ENCODE measurements at regions of chr22 and their contacts with region 1.

Region 1: GRCh38 chr22:37608477-37609239 is at the start of gene GGA1:
- DNase-seq: peak; percentile 94
- ATAC-seq: peak; percentile 85
- H3K4me3 ChIP-seq: peak within 1 kb of the TSS; percentile 78 to 92 (median 82)
- H3K27ac ChIP-seq: peak within 1 kb of the TSS; percentile 97
- H3K4me1 ChIP-seq: peaks cover 46% of the 10 kb centered on the region
- H3K27me3 ChIP-seq: peaks cover 2 to 5% of the 10 kb centered on the region in 2 experiments; a peak in 1 of 5 replicates
- CTCF ChIP-seq: no peak
- EP300 ChIP-seq: no peak; a peak in 1 of 4 replicates
- POLR2A ChIP-seq: peak; percentile 61 to 69
- RAD21 ChIP-seq: peak; percentile 24; the same call in 1 of the 2 replicates
- total RNA-seq, gene GGA1: 16.0 and 29.1 TPM in 2 replicates

Region 2: DNA sequence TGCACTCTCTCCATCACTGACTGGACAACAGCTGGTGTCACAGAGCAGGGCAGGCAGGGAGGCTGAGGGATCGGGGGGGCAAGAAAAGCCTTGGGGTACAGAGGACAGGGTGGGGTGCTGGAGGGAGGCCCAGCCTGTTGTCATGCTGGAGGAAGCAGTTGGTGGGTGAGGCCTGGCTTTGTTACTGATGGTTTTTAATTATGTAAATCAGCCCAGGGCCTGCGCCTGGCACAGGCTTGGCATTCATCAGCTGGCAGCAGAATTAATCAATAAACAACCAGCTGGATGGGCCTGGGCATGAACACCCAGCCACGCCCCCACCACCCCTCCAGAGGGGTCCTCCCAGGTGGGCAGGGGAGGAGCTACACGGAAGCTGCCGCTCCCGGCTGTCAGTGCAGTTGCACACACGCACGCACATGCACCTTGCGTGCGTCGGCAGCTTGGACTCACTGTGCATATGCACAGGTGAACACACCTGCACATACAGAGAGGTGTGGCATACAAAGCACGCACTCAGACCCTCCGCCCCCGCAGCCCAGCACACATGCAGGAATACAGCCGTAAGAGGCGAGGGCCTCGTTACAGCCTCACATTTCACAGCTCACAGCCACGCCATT is 160.0 kb before region 1 on chr22:
- CTCF ChIA-PET with region 1: no interaction called
- POLR2A ChIA-PET with region 1: no interaction called
- in situ Hi-C with region 1: no loop called
- intact Hi-C with region 1: no loop called
- DNase-seq: no peak
- ATAC-seq: no peak
- H3K4me3 ChIP-seq: no peak overlapping the region
- H3K27ac ChIP-seq: no peak overlapping the region
- H3K4me1 ChIP-seq: peaks cover 6% of the 10 kb centered on the region
- H3K27me3 ChIP-seq: peaks cover 0 to 18% of the 10 kb centered on the region in 2 experiments; a peak in 4 of 5 replicates
- CTCF ChIP-seq: no peak
- EP300 ChIP-seq: no peak
- POLR2A ChIP-seq: no peak
- RAD21 ChIP-seq: no peak

Region 3: GRCh38 chr22:37511395-37512104 is 97.1 kb before region 1 on chr22:
- CTCF ChIA-PET with region 1: no interaction called
- POLR2A ChIA-PET with region 1: interaction called, 12 read pairs
- in situ Hi-C with region 1: no loop called
- intact Hi-C with region 1: no loop called
- DNase-seq: no peak
- ATAC-seq: no peak
- H3K4me3 ChIP-seq: peak overlapping the region in 1 of 3 experiments; percentile 47; a peak in 1 of 6 replicates
- H3K27ac ChIP-seq: peak overlapping the region; percentile 98
- H3K4me1 ChIP-seq: peaks cover 82% of the 10 kb centered on the region
- H3K27me3 ChIP-seq: no peaks in the 10 kb centered on the region
- CTCF ChIP-seq: no peak
- EP300 ChIP-seq: no peak
- POLR2A ChIP-seq: no peak
- RAD21 ChIP-seq: no peak

Region 4: GRCh38 chr22:37544955-37545699 is 63.5 kb before region 1 on chr22:
- CTCF ChIA-PET with region 1: no interaction called
- POLR2A ChIA-PET with region 1: interaction called, 25 read pairs
- in situ Hi-C with region 1: loop called (anchors 10 kb)
- intact Hi-C with region 1: no loop called
- DNase-seq: peak; percentile 81
- ATAC-seq: peak; percentile 55
- H3K4me3 ChIP-seq: peak overlapping the region; percentile 32 to 70 (median 39); a peak in 5 of 6 replicates
- H3K27ac ChIP-seq: peak overlapping the region; percentile 90
- H3K4me1 ChIP-seq: peaks cover 89% of the 10 kb centered on the region
- H3K27me3 ChIP-seq: no peaks in the 10 kb centered on the region
- CTCF ChIP-seq: peak; percentile 95
- EP300 ChIP-seq: no peak
- POLR2A ChIP-seq: no peak
- RAD21 ChIP-seq: peak; percentile 83; the same call in 1 of the 2 replicates

Region 5: GRCh38 chr22:37566903-37567820 is 41.5 kb before region 1 on chr22:
- CTCF ChIA-PET with region 1: no interaction called
- POLR2A ChIA-PET with region 1: interaction called, 30 read pairs
- in situ Hi-C with region 1: no loop called
- intact Hi-C with region 1: no loop called
- DNase-seq: peak; percentile 61
- ATAC-seq: peak; percentile 27
- H3K4me3 ChIP-seq: no peak overlapping the region; a peak in 1 of 6 replicates
- H3K27ac ChIP-seq: no peak overlapping the region
- H3K4me1 ChIP-seq: peaks cover 90% of the 10 kb centered on the region
- H3K27me3 ChIP-seq: no peaks in the 10 kb centered on the region
- CTCF ChIP-seq: peak; percentile 96
- EP300 ChIP-seq: 0 out of 4 replicates have a peak, but pooled peaks of 1 of the 2 experiments have one; percentile 13
- POLR2A ChIP-seq: peak; percentile 10 to 40; a peak in 1 of 4 replicates
- RAD21 ChIP-seq: peak; percentile 97

Region 6: DNA sequence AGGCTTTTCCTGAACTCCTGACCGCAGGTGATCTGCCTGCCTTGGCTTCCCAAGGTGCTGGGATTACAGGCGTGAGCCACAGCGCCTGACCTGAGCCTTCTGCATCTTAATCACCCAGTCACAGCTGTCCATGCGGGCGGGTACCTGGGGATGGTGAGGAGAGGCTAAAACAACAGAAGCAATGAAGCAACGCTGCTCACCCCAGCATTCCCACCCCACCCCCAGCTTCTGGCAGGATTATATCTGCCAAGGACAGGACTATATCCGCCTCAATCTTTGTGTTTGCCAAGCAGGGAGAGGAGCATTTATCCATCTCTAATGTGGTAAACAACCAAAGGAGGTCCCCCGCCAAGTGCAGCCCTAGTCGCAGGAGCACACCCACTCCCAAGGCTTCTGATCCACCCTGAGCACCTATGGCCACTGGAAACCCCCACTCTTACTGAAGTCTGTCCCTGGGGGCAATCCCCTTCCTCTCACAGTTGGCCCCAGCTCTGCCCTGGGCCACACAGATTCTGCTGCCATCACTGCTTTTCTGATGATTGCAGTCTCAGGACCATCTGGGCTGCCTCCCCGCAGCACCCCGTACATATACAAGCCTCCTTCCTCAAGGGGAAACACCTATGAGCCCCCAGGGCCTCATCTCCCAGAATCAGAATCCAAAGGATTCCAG is 20.0 kb before region 1 on chr22:
- CTCF ChIA-PET with region 1: no interaction called
- POLR2A ChIA-PET with region 1: interaction called, 23 read pairs
- in situ Hi-C with region 1: no loop called
- intact Hi-C with region 1: no loop called
- DNase-seq: no peak
- ATAC-seq: peak; percentile 32; the same call in 2 of the 3 replicates
- H3K4me3 ChIP-seq: no peak overlapping the region
- H3K27ac ChIP-seq: no peak overlapping the region
- H3K4me1 ChIP-seq: peaks cover 62% of the 10 kb centered on the region
- H3K27me3 ChIP-seq: peaks cover 0 to 24% of the 10 kb centered on the region in 2 experiments; a peak in 3 of 5 replicates
- CTCF ChIP-seq: no peak
- EP300 ChIP-seq: no peak
- POLR2A ChIP-seq: no peak
- RAD21 ChIP-seq: no peak

Region 7: GRCh38 chr22:37643225-37643847 is 34.7 kb after region 1 on chr22:
- CTCF ChIA-PET with region 1: no interaction called
- POLR2A ChIA-PET with region 1: interaction called, 9 read pairs
- in situ Hi-C with region 1: no loop called
- intact Hi-C with region 1: loop called (anchors 2 kb)
- DNase-seq: no peak
- ATAC-seq: peak; percentile 61
- H3K4me3 ChIP-seq: no peak overlapping the region; a peak in 1 of 6 replicates
- H3K27ac ChIP-seq: no peak overlapping the region
- H3K4me1 ChIP-seq: peaks cover 40% of the 10 kb centered on the region
- H3K27me3 ChIP-seq: no peaks in the 10 kb centered on the region
- CTCF ChIP-seq: peak; percentile 92
- EP300 ChIP-seq: no peak
- POLR2A ChIP-seq: no peak
- RAD21 ChIP-seq: peak; percentile 90

Region 8: GRCh38 chr22:37686002-37686982 is 77.6 kb after region 1 on chr22 and contains the start of gene NOL12:
- CTCF ChIA-PET with region 1: no interaction called
- POLR2A ChIA-PET with region 1: interaction called, 20 read pairs
- in situ Hi-C with region 1: no loop called
- intact Hi-C with region 1: no loop called
- DNase-seq: peak; percentile 78
- ATAC-seq: peak; percentile 79
- H3K4me3 ChIP-seq: peak within 1 kb of the TSS; percentile 85 to 96 (median 93)
- H3K27ac ChIP-seq: peak within 1 kb of the TSS; percentile 82
- H3K4me1 ChIP-seq: peaks cover 41% of the 10 kb centered on the region
- H3K27me3 ChIP-seq: no peaks in the 10 kb centered on the region
- CTCF ChIP-seq: no peak
- EP300 ChIP-seq: 0 out of 4 replicates have a peak, but pooled peaks of 1 of the 2 experiments have one; percentile 24
- POLR2A ChIP-seq: peak; percentile 52 to 76; a peak in 3 of 4 replicates
- RAD21 ChIP-seq: peak; percentile 34
- total RNA-seq, gene NOL12: 27.5 and 31.4 TPM in 2 replicates